Breast epithelium (tissue), 4 donors: ENCODE measurements at regions of chrX and their contacts with region 1.

Region 1: DNA sequence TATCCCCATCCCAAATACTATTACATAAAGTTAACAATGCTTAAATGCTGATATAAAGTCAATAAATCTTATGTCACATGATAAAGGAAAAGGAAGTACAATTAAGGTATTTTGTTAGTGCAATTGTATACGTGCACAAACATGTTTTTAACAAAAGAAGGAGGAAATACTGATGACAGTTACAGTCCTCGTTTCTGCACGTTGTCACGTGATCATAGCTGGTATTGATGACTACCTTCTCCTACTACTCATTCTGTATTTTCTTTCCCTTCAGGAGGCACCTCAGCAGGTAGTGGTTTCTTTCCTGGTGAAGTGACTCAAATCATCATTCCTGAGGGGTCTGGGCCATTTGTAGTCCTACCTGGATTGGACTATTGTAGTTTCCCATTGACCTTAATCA is 335.1 kb upstream of the POU3F4 start:
- DNase-seq: no peak
- H3K4me3 ChIP-seq: no peak overlapping the region
- H3K27ac ChIP-seq: no peak overlapping the region
- H3K4me1 ChIP-seq: no peaks in the 10 kb centered on the region
- H3K27me3 ChIP-seq: peaks cover 0 to 24% of the 10 kb centered on the region in 2 donors
- CTCF ChIP-seq: no peak
- POLR2A ChIP-seq: no peak

Region 2: GRCh38 chrX:82934980-82935379 is 238.0 kb before region 1 on chrX:
- intact Hi-C with region 1: no loop called
- DNase-seq: no peak
- H3K4me3 ChIP-seq: no peak overlapping the region
- H3K27ac ChIP-seq: no peak overlapping the region
- H3K4me1 ChIP-seq: no peaks in the 10 kb centered on the region
- H3K27me3 ChIP-seq: peaks cover 0 to 6% of the 10 kb centered on the region in 2 donors
- CTCF ChIP-seq: no peak
- POLR2A ChIP-seq: no peak

Region 3: DNA sequence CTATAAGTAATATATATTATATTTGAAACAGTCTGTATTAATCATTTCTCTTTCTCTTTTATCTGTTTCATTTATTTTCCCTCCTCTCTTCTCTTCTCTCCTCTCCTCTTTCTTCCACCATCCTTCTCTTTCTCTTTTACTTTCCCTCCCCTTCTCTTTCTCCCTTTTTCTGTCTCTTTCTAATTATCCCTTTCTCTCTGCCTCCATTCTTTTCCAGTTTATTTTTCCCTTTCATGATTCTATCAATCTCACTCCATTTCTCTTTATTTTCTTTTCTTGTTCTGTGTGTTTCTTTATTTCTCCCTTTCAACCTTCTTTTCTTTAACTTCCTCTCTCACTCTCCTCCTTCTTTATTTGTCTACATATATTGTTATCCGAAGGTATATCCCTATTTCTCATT is 64.7 kb before region 1 on chrX:
- intact Hi-C with region 1: no loop called
- DNase-seq: no peak
- H3K4me3 ChIP-seq: no peak overlapping the region
- H3K27ac ChIP-seq: no peak overlapping the region
- H3K4me1 ChIP-seq: no peaks in the 10 kb centered on the region
- H3K27me3 ChIP-seq: peaks cover 0 to 3% of the 10 kb centered on the region in 2 donors
- CTCF ChIP-seq: no peak
- POLR2A ChIP-seq: no peak

Region 4: GRCh38 chrX:83185887-83186286 is 12.9 kb after region 1 on chrX:
- intact Hi-C with region 1: loop called (anchors 1 kb)
- DNase-seq: no peak
- H3K4me3 ChIP-seq: no peak overlapping the region
- H3K27ac ChIP-seq: no peak overlapping the region
- H3K4me1 ChIP-seq: no peaks in the 10 kb centered on the region
- H3K27me3 ChIP-seq: peaks cover 0 to 40% of the 10 kb centered on the region in 2 donors
- CTCF ChIP-seq: no peak
- POLR2A ChIP-seq: no peak

Region 5: GRCh38 chrX:83419030-83419792 is 246.2 kb after region 1 on chrX:
- intact Hi-C with region 1: no loop called
- DNase-seq: no peak
- H3K4me3 ChIP-seq: no peak overlapping the region
- H3K27ac ChIP-seq: no peak overlapping the region
- H3K4me1 ChIP-seq: no peaks in the 10 kb centered on the region
- H3K27me3 ChIP-seq: peaks cover 0 to 11% of the 10 kb centered on the region in 2 donors
- CTCF ChIP-seq: no peak
- POLR2A ChIP-seq: no peak